AG04450 (cell line): ENCODE measurements at regions of chr14 and their contacts with region 1.

Region 1: DNA sequence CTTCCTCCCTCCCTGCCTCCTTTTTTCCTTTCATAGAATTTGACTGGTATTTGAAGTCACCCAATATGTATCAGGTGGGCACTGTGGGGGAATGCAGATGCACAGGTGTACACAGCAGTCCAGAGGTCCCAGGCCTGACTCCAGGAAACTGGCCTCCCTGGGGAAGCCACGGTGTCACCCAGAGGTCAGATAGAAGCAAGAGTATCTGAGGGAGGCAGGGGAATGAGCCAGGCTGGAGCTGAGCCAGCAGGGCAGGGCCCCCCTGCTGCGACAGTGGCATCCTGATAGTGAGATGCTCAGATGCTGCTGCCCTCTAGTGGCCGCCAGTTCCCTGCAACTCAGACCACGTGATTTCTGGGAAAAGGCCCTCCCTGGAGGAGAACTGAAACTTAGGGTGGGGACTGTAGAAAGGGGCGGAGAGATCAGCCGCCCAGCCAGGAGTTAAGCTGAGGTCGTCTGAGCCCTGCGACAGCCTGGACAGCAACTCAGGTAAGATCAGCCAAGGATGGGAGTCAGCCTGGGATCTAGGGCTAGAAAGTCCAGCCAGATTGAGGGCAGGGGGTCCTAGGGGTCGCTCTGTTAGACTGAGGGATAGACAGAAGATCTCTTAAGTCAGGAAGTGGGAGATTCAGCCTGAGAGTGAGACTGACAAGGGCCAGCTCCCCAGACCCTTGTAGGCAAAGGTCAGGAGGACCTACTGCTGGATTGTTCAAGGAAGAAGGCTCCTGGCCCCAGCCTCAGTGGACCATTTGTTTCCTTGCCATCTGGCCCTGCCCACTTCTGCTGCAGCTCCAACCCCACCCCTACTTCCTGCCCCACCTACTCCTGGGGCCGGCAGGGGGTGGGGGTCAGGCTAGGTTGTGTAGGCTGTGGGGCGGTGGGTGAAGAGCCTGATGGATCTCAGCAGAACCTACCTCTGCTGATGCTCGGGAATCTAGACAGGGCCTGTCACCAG is at the start of gene IRF9:
- DNase-seq: peak; percentile 85
- H3K4me3 ChIP-seq: peak within 1 kb of the TSS; percentile 94
- H3K27ac ChIP-seq: peak within 1 kb of the TSS; percentile 61
- H3K27me3 ChIP-seq: no peaks in the 10 kb centered on the region
- CTCF ChIP-seq: peak; percentile 89
- polyA plus RNA-seq, gene IRF9: 48.4 and 55.1 TPM in 2 replicates

Region 2: DNA sequence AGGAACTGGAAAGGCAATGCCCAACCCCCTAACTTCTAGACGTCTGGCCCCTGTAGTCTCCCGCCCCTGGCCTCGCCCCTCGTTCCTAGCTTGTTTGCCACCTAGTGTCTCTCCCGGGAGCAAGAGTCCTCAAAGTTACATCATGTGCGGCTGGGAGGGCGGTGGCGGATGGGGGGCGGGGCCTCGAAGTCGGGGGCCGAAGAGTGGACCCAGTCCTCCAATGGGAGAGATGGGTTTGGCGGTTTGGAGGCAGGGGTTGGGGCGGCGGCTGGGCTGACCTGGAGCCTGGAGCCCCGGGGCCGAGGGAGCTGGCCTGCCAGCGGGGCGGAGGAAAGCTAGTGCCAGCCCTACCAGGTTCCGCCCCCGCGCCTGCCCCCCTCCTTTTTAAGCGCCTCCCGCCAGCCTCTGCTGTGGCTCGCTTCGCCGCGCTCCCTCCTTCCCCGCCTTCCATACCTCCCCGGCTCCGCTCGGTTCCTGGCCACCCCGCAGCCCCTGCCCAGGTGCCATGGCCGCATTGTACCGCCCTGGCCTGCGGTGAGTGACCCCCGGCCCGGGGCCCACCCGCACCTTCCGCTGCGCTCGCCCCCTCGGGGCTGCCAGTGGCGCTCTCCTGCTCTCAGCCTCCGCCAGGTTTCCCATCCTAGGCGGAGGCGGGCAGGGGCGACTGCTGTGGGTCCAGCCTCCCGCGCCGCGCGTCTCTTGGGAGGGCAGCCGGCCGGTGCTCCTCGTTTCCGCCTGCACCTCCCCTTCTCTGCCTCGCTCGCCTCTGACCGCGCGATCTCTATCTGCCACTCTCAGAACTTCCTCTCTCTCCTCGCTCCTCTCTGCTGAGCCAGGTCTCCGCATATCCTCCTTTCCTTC is 67.0 kb before region 1 on chr14 and contains the start of gene PCK2:
- CTCF ChIA-PET with region 1: interaction called, 17 read pairs
- POLR2A ChIA-PET with region 1: no interaction called
- DNase-seq: peak; percentile 73
- H3K4me3 ChIP-seq: peak within 1 kb of the TSS; percentile 83
- H3K27ac ChIP-seq: peak within 1 kb of the TSS; percentile 68
- H3K27me3 ChIP-seq: no peaks in the 10 kb centered on the region
- CTCF ChIP-seq: no peak
- polyA plus RNA-seq, gene PCK2: 47.0 and 59.9 TPM in 2 replicates

Region 3: GRCh38 chr14:24114536-24115450 is 46.3 kb before region 1 on chr14 and contains the starts of genes DCAF11 and NRL:
- CTCF ChIA-PET with region 1: interaction called, 16 read pairs
- POLR2A ChIA-PET with region 1: interaction called, 4 read pairs
- DNase-seq: peak; percentile 99
- H3K4me3 ChIP-seq: peak within 1 kb of the TSS; percentile 92
- H3K27ac ChIP-seq: peak within 1 kb of the TSS; percentile 99
- H3K27me3 ChIP-seq: no peaks in the 10 kb centered on the region
- CTCF ChIP-seq: no peak
- polyA plus RNA-seq, gene DCAF11: 29.7 and 32.5 TPM in 2 replicates
- polyA plus RNA-seq, gene NRL: 0.41 and 0.46 TPM in 2 replicates

Region 4: DNA sequence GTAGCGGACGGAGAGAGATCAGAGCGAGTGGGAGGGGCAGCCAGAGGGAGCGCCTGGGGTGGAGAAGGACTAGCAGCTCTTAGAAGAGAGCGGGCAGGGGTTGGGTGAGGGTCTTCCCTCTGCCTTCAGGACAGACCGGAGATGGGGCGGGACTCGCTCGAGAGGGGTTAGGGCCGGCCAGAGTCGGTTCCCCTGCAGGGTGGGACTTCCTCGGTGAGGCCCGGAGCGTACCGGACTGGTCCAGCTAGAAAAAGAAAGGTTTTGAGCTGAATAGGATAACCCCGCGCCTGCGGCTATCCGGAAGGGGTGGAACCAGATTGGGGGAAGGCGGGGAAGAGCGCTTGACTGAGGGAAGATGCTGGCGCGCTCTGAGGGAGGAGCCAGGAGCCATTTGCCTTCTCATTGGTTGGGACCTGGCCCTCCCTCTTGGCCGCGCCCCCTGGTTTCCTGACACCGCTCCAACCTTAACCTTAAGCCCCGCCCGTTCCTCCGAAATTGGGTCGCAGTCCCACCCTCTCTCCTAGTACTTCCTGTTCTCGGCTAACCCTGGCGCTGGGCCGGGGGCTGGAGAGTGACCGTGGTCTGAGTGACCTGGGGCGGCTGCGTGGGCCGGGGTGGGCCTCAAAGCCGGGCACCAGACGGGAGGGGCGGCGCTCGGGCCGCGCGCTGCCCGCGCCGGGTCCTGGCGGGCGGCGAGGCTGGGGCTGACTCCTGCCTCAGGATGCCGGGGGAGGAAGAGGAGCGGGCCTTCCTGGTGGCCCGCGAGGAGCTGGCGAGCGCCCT is 14.0 kb before region 1 on chr14 and contains the start of gene RNF31:
- CTCF ChIA-PET with region 1: interaction called, 54 read pairs
- POLR2A ChIA-PET with region 1: interaction called, 12 read pairs
- DNase-seq: peak; percentile 95
- H3K4me3 ChIP-seq: peak within 1 kb of the TSS; percentile 72
- H3K27ac ChIP-seq: peak within 1 kb of the TSS; percentile 90
- H3K27me3 ChIP-seq: no peaks in the 10 kb centered on the region
- CTCF ChIP-seq: no peak
- polyA plus RNA-seq, gene RNF31: 7.4 and 14.4 TPM in 2 replicates

Region 5: DNA sequence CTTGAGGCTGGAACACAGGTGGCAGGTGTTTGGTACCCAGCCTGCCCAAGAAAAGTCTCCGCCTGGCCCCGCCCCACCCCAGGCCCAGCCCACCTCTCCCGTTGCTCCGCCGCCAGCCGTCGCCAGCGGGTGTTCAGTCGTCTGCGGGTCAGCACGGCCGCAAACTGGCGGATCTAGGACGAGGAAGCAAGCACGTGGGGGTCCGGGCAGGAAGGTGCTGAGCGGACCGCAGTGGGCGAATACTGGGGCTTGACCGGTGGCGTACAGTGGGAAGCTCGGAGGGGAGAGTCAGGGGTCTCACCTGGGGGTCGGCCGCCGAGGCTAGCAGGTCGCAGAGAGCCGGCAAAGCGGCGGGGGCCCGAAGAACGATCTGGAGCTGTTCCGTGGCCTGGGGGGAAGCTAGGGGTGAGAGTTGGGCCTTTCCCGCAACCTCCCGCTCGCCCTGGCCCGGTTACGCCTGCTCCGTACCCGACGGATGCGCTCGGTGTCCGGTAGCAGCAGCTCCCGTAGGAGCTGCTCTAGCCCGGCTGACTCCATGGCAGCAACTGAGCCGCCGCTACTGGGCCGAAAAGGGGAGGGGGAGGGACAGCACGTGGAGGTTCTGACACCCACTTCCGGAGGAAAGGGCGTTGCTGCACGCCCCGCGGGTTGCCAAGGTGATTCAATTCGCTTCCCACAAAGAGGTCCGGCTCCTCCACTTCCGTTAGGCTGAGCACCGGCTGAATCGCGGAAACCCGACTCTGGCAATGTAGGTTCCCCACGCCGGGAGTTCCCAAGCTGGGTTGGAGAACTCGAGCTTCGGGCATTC is 27.3 kb after region 1 on chr14 and contains the start of gene IPO4:
- CTCF ChIA-PET with region 1: interaction called, 10 read pairs
- POLR2A ChIA-PET with region 1: no interaction called
- DNase-seq: peak; percentile 94
- H3K4me3 ChIP-seq: peak within 1 kb of the TSS; percentile 85
- H3K27ac ChIP-seq: peak within 1 kb of the TSS; percentile 77
- H3K27me3 ChIP-seq: no peaks in the 10 kb centered on the region
- CTCF ChIP-seq: no peak
- polyA plus RNA-seq, gene IPO4: 15.2 and 20.9 TPM in 2 replicates